Natural killer cell (primary cell): ENCODE measurements at regions of chr2 and their contacts with region 1.

Region 1: DNA sequence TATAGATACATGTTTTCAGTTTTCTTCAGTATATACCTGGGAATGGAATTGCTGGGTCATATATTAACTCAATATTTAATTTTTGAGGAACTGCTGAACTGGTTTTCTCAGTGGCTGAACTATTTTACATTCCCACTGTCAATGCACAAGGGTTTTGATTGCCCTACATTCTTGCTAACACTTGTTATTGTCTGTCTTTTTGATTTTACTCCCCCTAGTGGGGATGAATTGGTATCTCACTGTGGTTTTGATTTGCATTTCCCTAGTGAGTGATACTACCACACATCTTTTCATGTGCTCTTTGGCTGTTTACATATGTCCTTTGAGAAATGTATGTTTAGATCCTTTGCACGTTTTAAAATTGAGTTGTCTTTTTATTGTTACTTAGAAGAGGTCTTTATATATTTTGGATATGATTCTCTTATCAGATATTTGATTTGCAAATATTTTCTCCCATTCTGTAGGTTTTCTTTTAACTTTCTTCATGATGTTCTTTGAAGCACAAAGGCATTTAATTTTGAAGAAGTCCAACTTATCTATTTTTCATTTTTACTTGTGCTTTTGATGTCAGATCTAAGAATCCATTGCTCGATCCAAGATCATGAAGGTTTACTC is 36.2 kb downstream of the ASB1 start:
- DNase-seq: peak in 1 of 2 donors; percentile 72
- ATAC-seq: peak; percentile 73 to 84 (median 74)
- H3K4me3 ChIP-seq: no peak overlapping the region
- H3K4me3 Mint-ChIP-seq: no peak overlapping the region
- H3K27ac ChIP-seq: no peak overlapping the region
- H3K27ac Mint-ChIP-seq: no peak overlapping the region
- H3K4me1 ChIP-seq: no peaks in the 10 kb centered on the region
- H3K4me1 Mint-ChIP-seq: peaks cover 0 to 6% of the 10 kb centered on the region in 2 donors
- H3K27me3 ChIP-seq: no peaks in the 10 kb centered on the region
- H3K27me3 Mint-ChIP-seq: no peaks in the 10 kb centered on the region
- CTCF ChIP-seq: peak; percentile 89

Region 2: DNA sequence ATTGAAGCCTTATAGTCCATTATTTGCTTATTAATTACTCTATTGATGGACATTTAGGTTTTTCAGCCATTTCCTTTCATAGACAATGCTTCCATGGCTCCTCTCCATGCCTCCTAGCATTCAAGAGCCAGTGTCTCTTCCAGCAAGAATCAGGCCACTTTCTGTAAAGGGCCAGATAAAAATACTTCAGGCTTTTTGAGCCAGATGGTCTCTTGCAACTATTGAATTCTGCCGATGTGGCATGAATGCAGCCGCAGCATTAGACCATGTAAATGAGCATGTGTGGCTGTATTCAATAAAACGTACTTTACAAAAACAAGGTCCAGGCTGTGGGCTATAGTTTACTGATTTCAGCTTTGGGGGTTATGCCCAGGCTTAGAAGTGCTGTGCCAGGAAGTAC is 104.1 kb before region 1 on chr2:
- intact Hi-C with region 1: loop called (anchors 5 kb)
- DNase-seq: no peak
- ATAC-seq: no peak
- H3K4me3 ChIP-seq: no peak overlapping the region
- H3K4me3 Mint-ChIP-seq: no peak overlapping the region
- H3K27ac ChIP-seq: no peak overlapping the region
- H3K27ac Mint-ChIP-seq: no peak overlapping the region
- H3K4me1 ChIP-seq: no peaks in the 10 kb centered on the region
- H3K4me1 Mint-ChIP-seq: peaks cover 5 to 9% of the 10 kb centered on the region in 2 donors
- H3K27me3 ChIP-seq: no peaks in the 10 kb centered on the region
- H3K27me3 Mint-ChIP-seq: no peaks in the 10 kb centered on the region
- CTCF ChIP-seq: no peak

Region 3: GRCh38 chr2:238484522-238485452 is 21.9 kb after region 1 on chr2:
- intact Hi-C with region 1: no loop called
- DNase-seq: no peak
- ATAC-seq: no peak
- H3K4me3 ChIP-seq: no peak overlapping the region
- H3K4me3 Mint-ChIP-seq: no peak overlapping the region
- H3K27ac ChIP-seq: no peak overlapping the region
- H3K27ac Mint-ChIP-seq: no peak overlapping the region
- H3K4me1 ChIP-seq: no peaks in the 10 kb centered on the region
- H3K4me1 Mint-ChIP-seq: no peaks in the 10 kb centered on the region
- H3K27me3 ChIP-seq: no peaks in the 10 kb centered on the region
- H3K27me3 Mint-ChIP-seq: no peaks in the 10 kb centered on the region
- CTCF ChIP-seq: no peak